PC-3 (cell line): ENCODE measurements at regions of chr12 and their contacts with region 1.

Region 1: DNA sequence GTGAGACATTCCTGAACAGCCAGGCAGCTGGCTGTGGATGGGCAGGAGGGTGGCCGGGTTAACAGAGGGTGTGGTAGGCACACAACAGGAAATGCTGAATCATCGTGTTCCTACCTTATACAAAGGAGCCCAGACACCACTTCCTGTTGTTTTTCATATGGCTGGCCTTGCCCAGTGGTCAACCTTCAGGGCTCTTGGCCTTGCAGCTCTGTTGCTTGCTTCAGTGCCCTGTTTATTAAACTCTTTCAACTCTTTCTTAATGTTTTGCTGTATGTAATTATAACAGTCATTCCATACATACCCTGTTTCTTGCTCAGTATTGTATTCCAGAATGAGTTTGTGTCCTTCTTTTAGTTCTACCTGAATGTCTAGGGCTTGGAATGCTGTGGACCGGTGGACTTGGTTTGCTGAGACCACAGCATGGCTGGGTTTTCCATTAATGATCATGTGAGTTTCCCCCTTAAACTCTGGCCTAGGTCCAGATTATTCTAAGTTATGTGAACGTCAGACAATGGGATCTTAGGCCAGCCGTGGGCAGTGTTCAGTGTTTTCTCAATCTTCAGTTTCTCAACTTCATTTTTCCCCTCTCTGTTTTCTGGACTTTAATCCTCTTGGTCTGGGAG is 11.9 kb downstream of the CFAP54 start:
- DNase-seq: peak; percentile 85
- ATAC-seq: peak; percentile 99
- H3K4me3 ChIP-seq: peak overlapping the region; percentile 14; the same call in 1 of the 2 replicates
- H3K27ac ChIP-seq: peak overlapping the region; percentile 84
- H3K4me1 ChIP-seq: peaks cover 27% of the 10 kb centered on the region
- H3K27me3 ChIP-seq: no peaks in the 10 kb centered on the region
- CTCF ChIP-seq: no peak

Region 2: DNA sequence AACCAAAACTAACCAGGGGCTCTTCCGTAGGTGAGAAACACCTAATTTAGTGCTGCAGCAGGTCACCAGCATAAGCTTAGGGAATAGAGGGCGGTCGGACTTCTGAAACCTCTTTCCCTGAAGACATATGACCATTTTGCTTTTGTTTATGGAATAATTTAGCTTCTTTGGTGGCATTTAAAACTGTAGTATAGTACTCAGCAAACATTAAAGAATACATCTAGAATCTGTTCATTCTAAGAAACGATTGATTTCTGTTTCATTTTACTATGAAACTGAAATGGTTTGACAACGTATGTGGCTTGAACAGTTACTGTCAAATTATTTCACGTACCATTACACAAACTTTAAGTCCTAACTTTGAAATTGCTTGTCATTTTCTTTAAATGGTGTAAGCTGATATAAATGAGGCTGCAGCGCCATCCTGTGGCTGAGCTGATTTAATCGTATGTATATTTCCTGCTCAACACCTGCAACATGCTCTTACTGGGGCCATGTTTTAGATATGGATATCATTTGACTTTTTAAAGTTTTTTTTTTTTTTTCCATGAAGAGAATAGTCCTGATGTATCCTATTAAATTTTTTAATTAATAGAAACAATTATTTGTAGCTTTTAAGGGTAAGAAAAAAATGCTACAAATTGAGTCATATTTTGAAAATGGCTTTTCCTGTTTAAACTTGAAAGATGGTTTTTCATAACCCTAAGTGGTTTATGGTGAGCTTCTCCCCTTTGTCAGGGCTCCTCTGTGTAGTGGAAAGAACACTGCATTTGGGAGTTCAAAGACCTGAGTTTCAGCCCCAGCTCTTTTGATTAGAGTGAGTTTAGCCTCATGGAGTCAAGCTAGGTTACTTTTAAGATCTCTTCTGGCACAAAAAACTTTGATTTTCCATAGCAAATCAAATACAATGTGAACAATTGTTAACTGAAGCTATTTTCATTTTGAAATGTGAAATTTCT is 15.5 kb after region 1 on chr12:
- CTCF ChIA-PET with region 1: interaction called, 12 read pairs
- POLR2A ChIA-PET with region 1: no interaction called
- intact Hi-C with region 1: no loop called
- DNase-seq: peak; percentile 91
- ATAC-seq: peak; percentile 69
- H3K4me3 ChIP-seq: peak overlapping the region; percentile 46
- H3K27ac ChIP-seq: no peak overlapping the region
- H3K4me1 ChIP-seq: peaks cover 10% of the 10 kb centered on the region; the same call in 1 of the 2 replicates
- H3K27me3 ChIP-seq: no peaks in the 10 kb centered on the region
- CTCF ChIP-seq: peak; percentile 88